ENCODE measurements at regions of chr12 and their contacts with region 1.

Region 1: DNA sequence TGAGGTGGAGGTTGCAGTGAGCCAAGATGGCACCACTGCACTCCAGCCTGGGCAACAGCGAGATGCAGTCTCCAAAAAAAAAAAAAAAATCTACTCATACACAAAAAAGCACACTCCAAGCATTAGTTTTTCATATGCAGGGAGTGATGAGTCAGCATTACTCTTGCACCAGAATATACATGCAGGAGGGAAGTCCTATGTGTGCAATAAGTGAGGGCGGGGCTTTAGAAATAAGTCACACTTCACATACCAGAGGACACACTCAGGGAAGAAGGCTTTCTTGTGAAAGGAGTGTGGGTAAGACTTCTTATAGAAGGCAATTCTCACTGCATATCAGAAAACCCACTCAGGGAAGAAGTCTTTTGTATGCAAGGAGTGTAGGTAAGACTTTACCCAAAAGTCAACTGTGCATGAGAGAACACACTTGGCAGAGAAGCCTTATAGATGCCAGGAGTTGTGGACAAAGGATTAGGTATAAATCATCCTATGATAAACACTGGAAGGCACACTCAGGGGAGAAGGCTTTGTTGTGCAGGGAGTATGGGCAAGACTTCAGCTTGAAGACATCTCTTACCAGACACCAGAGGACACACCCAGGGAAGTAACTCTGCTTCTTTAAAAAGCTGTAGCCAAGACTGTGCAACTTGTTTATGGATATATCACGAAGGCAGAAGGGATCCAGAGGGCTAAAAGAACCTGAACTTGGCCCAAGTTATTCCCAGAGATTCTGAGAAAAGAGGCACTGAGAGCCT is 50.5 kb downstream of the ATF7 start:
- DNase-seq: peak; percentile 88
- ATAC-seq: peak; percentile 81
- H3K4me3 ChIP-seq: no peak overlapping the region
- H3K27ac ChIP-seq: peak overlapping the region; percentile 48
- H3K4me1 ChIP-seq: peaks cover 18% of the 10 kb centered on the region
- H3K27me3 ChIP-seq: no peaks in the 10 kb centered on the region
- CTCF ChIP-seq: no peak

Region 2: GRCh38 chr12:52965333-52965724 is 610.3 kb before region 1 on chr12:
- CTCF ChIA-PET with region 1: no interaction called
- POLR2A ChIA-PET with region 1: no interaction called
- intact Hi-C with region 1: no loop called
- DNase-seq: no peak
- ATAC-seq: no peak
- H3K4me3 ChIP-seq: no peak overlapping the region
- H3K27ac ChIP-seq: no peak overlapping the region
- H3K4me1 ChIP-seq: peaks cover 7% of the 10 kb centered on the region
- H3K27me3 ChIP-seq: no peaks in the 10 kb centered on the region
- CTCF ChIP-seq: no peak

Region 3: GRCh38 chr12:53151039-53151438 is 424.6 kb before region 1 on chr12:
- CTCF ChIA-PET with region 1: no interaction called
- POLR2A ChIA-PET with region 1: no interaction called
- intact Hi-C with region 1: no loop called
- DNase-seq: no peak
- ATAC-seq: no peak
- H3K4me3 ChIP-seq: no peak overlapping the region
- H3K27ac ChIP-seq: no peak overlapping the region
- H3K4me1 ChIP-seq: no peaks in the 10 kb centered on the region
- H3K27me3 ChIP-seq: no peaks in the 10 kb centered on the region
- CTCF ChIP-seq: no peak

Region 4: DNA sequence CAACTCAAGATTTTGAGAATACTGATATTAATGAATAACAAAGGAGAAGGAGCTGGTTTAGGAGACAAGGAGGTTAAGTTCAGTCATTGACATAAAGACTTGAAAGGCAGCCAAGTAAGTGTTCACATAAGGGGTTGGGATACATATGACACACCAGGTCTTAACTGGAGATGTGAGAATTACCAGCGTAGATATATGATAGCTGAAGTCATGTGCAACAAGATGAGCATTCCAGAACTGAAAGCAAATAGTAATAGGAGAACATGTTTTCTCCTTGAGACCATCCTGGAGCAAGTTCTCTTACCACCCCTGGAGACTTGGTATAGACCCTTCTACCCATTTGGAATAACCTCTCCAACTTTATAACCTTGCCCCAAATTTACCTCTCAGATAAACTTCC is 25.1 kb before region 1 on chr12:
- CTCF ChIA-PET with region 1: interaction called, 11 read pairs
- POLR2A ChIA-PET with region 1: interaction called, 3 read pairs
- intact Hi-C with region 1: no loop called
- DNase-seq: peak; percentile 71
- ATAC-seq: peak; percentile 95
- H3K4me3 ChIP-seq: no peak overlapping the region
- H3K27ac ChIP-seq: 0 out of 2 replicates have a peak overlapping the region, but pooled peaks have one; percentile 1
- H3K4me1 ChIP-seq: peaks cover 11% of the 10 kb centered on the region
- H3K27me3 ChIP-seq: no peaks in the 10 kb centered on the region
- CTCF ChIP-seq: no peak

Region 5: GRCh38 chr12:53591301-53592206 is 15.9 kb after region 1 on chr12:
- CTCF ChIA-PET with region 1: interaction called, 3 read pairs
- POLR2A ChIA-PET with region 1: no interaction called
- intact Hi-C with region 1: loop called (anchors 2 kb)
- DNase-seq: no peak
- ATAC-seq: peak; percentile 66
- H3K4me3 ChIP-seq: no peak overlapping the region
- H3K27ac ChIP-seq: no peak overlapping the region
- H3K4me1 ChIP-seq: no peaks in the 10 kb centered on the region
- H3K27me3 ChIP-seq: no peaks in the 10 kb centered on the region
- CTCF ChIP-seq: no peak

Region 6: DNA sequence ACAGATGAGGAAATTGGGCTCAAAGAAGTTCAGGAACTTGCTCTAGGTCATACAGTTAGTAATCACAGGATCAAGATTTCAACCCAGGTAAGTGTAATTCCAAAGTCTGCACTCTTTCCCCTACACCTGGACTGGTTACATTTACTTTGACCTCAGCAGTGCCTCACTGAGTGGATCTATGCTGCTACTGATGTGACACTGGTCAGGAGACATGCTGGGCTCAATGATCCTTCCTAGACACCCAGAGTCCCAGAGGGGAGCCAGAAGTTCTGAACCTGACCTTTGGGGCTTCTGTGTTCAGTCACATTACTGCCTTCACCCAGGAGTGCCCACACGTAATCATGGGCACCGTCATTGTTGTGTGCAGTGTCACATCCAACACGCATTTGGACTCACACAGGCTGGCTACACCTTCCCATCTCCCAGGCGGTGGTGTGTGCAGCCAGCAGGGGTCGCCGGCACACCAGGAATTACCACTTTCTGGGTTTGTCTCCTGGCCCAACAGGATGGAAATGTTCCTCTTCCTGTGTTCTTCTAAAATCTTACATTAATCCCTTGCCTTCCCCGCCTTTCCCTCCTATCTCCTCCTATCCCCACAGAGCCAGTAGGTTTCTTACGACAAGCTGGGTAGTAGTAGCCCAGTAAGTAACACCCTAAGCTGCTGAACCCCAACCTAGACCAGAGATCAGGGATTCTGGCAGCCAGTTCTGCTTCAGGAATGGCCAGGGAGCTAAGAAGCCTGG is 126.0 kb after region 1 on chr12:
- CTCF ChIA-PET with region 1: interaction called, 16 read pairs
- POLR2A ChIA-PET with region 1: no interaction called
- intact Hi-C with region 1: no loop called
- DNase-seq: peak; percentile 81
- ATAC-seq: peak; percentile 99
- H3K4me3 ChIP-seq: no peak overlapping the region
- H3K27ac ChIP-seq: no peak overlapping the region
- H3K4me1 ChIP-seq: no peaks in the 10 kb centered on the region
- H3K27me3 ChIP-seq: 0 out of 2 replicates have a peak, but pooled peaks cover 4% of the 10 kb centered on the region
- CTCF ChIP-seq: peak; percentile 94